Posterior vena cava (tissue), 2 donors: ENCODE measurements at regions of chr18 and their contacts with region 1.

Region 1: DNA sequence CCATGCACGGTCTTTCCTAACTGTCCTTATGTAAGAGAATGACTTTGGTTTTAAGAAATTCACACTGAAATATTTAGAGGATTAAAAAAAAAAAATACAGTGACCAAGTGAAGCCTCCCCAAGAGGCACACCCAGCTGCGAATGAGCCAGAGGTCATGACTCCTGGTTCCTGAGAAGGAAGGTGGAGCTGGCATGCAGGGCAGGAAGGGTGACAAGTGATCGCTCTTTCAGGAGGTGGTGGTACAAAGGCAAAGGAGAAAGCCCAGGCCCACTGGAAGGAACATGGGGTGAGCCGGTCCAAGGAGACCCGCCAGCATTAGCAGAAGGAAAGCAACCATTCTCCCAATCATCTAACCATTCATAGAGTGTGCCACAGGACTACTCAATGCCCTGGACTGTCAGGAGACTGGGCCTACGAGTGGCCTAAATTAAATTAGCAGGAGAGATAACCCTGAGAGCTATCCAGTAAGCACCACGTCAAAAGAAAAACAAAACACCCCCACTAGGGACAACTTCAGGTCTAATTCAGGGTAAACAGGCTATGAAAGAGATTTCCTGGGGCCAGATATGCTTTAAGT is 7.8 kb downstream of the INO80C start:
- DNase-seq: no peak

Region 2: DNA sequence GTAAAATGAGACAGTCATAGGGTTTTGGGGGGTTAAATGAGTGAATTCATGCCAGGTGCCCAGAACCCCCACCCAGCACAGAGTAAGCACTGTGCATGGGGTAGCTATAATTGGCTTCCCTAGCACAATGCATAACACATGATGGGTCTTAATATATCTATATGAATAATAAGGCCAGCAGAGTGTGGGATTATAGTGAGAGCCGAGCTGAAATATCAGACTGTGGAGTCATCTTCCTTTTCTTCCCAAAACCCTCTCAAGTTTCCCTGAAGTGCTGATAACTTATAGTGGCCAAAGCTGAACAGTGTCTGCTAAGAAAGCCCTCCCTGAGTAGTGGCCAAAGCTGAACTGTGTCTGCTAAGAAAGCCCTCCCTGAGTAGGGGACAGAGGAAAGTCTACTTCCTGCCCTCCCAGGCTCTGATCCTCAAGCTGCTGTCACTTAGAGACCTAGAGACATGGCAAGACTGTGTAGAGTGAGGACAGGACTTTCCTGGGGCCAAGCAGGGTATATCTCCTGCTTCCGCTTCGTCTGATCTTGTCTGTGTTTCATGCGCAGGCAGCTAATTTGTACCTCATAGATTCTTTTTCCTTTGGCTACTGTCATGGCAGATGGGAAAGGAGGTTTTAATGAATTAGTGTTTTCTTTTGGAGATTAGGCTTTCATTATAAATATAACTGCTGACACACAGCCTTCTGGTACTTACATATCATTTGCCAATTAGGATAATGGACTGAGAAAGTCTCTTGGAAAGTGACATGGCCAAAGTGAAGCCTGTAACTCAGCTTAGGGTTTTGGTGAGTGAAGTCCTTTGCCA is 902.4 kb after region 1 on chr18:
- intact Hi-C with region 1: loop called in 1 of 2 experiments (anchors 5 kb)
- DNase-seq: no peak